CD4-positive, alpha-beta T cell (primary cell): ENCODE measurements at regions of chr16 and their contacts with region 1.

Region 1: GRCh38 chr16:69123910-69124309 is 8.5 kb downstream of the CHTF8 start:
- DNase-seq: peak; percentile 29 to 84 (median 54)
- ATAC-seq: peak; percentile 95
- H3K4me3 ChIP-seq: no peak overlapping the region
- H3K4me3 Mint-ChIP-seq: no peak overlapping the region
- H3K27ac ChIP-seq: no peak overlapping the region
- H3K27ac Mint-ChIP-seq: no peak overlapping the region
- H3K4me1 ChIP-seq: peaks cover 4% of the 10 kb centered on the region
- H3K4me1 Mint-ChIP-seq: peaks cover 26% of the 10 kb centered on the region
- H3K27me3 ChIP-seq: no peaks in the 10 kb centered on the region
- H3K27me3 Mint-ChIP-seq: no peaks in the 10 kb centered on the region
- CTCF ChIP-seq: peak; percentile 77

Region 2: GRCh38 chr16:68590201-68590994 is 533.5 kb before region 1 on chr16:
- CTCF ChIA-PET with region 1: interaction called, 6 read pairs
- POLR2A ChIA-PET with region 1: no interaction called
- intact Hi-C with region 1: loop called (anchors 2 to 5 kb)
- DNase-seq: peak; percentile 8 to 69 (median 42)
- ATAC-seq: peak; percentile 81
- H3K4me3 ChIP-seq: no peak overlapping the region
- H3K4me3 Mint-ChIP-seq: no peak overlapping the region
- H3K27ac ChIP-seq: no peak overlapping the region
- H3K27ac Mint-ChIP-seq: no peak overlapping the region
- H3K4me1 ChIP-seq: peaks cover 5% of the 10 kb centered on the region
- H3K4me1 Mint-ChIP-seq: peaks cover 4% of the 10 kb centered on the region
- H3K27me3 ChIP-seq: no peaks in the 10 kb centered on the region
- H3K27me3 Mint-ChIP-seq: no peaks in the 10 kb centered on the region
- CTCF ChIP-seq: peak; percentile 54

Region 3: DNA sequence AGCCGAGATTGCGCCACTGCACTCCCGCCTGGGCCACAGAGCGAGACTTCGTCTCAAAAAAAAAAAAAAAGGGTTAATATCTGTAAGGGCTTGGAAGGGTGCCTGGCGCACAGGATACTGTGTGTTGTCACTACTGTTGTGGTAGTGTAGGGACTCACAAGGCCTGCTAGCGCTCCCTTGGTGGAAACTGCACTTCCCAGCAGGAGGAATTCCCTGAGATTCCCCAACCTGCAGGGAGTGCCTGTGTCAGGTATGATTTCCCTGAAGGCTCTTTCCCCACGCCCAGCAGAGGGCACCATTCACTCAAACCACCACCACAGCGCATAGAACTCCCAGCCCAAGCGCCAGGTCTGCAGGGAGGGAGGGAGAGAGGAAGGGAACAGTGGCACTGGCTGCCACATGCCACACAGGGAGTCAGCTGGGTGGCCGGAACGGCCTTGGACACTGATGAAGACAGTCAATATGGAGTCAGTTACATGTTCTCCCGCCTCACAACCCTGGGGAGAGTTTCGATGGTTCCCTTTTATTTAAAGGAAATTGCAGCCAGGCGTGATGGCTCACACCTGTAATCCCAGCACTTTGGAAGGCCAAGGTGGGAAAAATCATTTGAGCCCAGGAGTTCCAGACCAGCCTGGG is 419.6 kb before region 1 on chr16:
- CTCF ChIA-PET with region 1: no interaction called
- POLR2A ChIA-PET with region 1: no interaction called
- intact Hi-C with region 1: loop called in 1 of 2 experiments (anchors 2 kb)
- DNase-seq: peak; percentile 17 to 68 (median 36)
- ATAC-seq: no peak
- H3K4me3 ChIP-seq: no peak overlapping the region
- H3K4me3 Mint-ChIP-seq: no peak overlapping the region
- H3K27ac ChIP-seq: no peak overlapping the region
- H3K27ac Mint-ChIP-seq: no peak overlapping the region
- H3K4me1 ChIP-seq: no peaks in the 10 kb centered on the region
- H3K4me1 Mint-ChIP-seq: no peaks in the 10 kb centered on the region
- H3K27me3 ChIP-seq: no peaks in the 10 kb centered on the region
- H3K27me3 Mint-ChIP-seq: peaks cover 5% of the 10 kb centered on the region
- CTCF ChIP-seq: peak; percentile 66

Region 4: DNA sequence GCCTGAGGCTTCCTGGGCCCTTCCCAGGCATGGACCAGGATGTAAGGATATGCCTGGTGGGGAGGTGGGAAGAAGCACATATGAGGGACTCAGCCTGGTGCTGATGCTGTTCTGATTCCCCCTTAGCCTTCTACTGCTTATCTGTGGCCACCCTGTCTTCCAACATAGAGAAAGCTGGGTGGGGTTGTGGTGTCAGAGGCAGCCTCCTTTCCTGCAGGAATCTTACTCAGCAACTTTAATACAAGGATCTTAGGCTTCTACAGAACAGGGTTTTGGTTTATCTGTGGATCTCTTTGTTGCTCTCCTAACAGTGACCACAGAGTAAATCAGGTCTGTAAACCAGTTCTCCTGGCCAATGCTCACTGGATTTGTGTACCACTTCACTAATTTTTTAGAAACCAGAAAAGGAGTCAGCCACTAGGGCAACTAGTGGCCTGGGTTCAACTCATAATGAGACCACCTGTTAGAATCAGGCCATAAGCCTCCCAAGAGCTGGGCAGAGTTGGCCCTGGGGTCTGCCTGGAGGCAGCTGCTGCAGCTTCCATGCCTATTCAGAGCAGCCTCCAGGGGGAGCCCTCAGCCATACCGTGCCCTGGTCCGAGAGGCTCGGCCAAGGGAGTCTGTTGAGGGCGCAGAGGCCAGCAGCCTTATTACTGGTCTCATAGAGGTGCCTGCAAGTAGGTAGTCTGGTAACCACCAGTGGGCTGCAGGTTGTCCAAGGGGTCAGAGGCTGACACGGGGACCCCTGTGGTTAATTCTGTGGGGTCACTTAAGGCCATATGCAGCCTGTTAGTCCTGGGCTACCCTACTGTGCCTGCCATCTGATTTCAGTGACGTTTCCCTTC is 11.4 kb before region 1 on chr16:
- CTCF ChIA-PET with region 1: interaction called, 17 read pairs
- POLR2A ChIA-PET with region 1: interaction called, 3 read pairs
- intact Hi-C with region 1: no loop called
- DNase-seq: peak in 12 of 14 experiments; percentile 18 to 62 (median 34)
- ATAC-seq: peak; percentile 63
- H3K4me3 ChIP-seq: no peak overlapping the region
- H3K4me3 Mint-ChIP-seq: no peak overlapping the region
- H3K27ac ChIP-seq: no peak overlapping the region
- H3K27ac Mint-ChIP-seq: no peak overlapping the region
- H3K4me1 ChIP-seq: peaks cover 12% of the 10 kb centered on the region
- H3K4me1 Mint-ChIP-seq: peaks cover 7% of the 10 kb centered on the region
- H3K27me3 ChIP-seq: peaks cover 16 to 18% of the 10 kb centered on the region in 2 experiments
- H3K27me3 Mint-ChIP-seq: peaks cover 21% of the 10 kb centered on the region
- CTCF ChIP-seq: peak; percentile 74

Region 5: GRCh38 chr16:69143116-69143515 is 19.2 kb after region 1 on chr16:
- CTCF ChIA-PET with region 1: no interaction called
- POLR2A ChIA-PET with region 1: no interaction called
- intact Hi-C with region 1: no loop called
- DNase-seq: peak in 1 of 14 experiments; percentile 20
- ATAC-seq: no peak
- H3K4me3 ChIP-seq: no peak overlapping the region
- H3K4me3 Mint-ChIP-seq: no peak overlapping the region
- H3K27ac ChIP-seq: no peak overlapping the region
- H3K27ac Mint-ChIP-seq: no peak overlapping the region
- H3K4me1 ChIP-seq: no peaks in the 10 kb centered on the region
- H3K4me1 Mint-ChIP-seq: no peaks in the 10 kb centered on the region
- H3K27me3 ChIP-seq: no peaks in the 10 kb centered on the region
- H3K27me3 Mint-ChIP-seq: no peaks in the 10 kb centered on the region
- CTCF ChIP-seq: no peak

Region 6: GRCh38 chr16:69225121-69225520 is 101.2 kb after region 1 on chr16:
- CTCF ChIA-PET with region 1: no interaction called
- POLR2A ChIA-PET with region 1: no interaction called
- intact Hi-C with region 1: no loop called
- DNase-seq: no peak
- ATAC-seq: no peak
- H3K4me3 ChIP-seq: no peak overlapping the region
- H3K4me3 Mint-ChIP-seq: no peak overlapping the region
- H3K27ac ChIP-seq: no peak overlapping the region
- H3K27ac Mint-ChIP-seq: no peak overlapping the region
- H3K4me1 ChIP-seq: no peaks in the 10 kb centered on the region
- H3K4me1 Mint-ChIP-seq: peaks cover 6% of the 10 kb centered on the region
- H3K27me3 ChIP-seq: no peaks in the 10 kb centered on the region
- H3K27me3 Mint-ChIP-seq: no peaks in the 10 kb centered on the region
- CTCF ChIP-seq: no peak